ENCODE measurements at regions of chr21 and their contacts with region 1.

Region 1: DNA sequence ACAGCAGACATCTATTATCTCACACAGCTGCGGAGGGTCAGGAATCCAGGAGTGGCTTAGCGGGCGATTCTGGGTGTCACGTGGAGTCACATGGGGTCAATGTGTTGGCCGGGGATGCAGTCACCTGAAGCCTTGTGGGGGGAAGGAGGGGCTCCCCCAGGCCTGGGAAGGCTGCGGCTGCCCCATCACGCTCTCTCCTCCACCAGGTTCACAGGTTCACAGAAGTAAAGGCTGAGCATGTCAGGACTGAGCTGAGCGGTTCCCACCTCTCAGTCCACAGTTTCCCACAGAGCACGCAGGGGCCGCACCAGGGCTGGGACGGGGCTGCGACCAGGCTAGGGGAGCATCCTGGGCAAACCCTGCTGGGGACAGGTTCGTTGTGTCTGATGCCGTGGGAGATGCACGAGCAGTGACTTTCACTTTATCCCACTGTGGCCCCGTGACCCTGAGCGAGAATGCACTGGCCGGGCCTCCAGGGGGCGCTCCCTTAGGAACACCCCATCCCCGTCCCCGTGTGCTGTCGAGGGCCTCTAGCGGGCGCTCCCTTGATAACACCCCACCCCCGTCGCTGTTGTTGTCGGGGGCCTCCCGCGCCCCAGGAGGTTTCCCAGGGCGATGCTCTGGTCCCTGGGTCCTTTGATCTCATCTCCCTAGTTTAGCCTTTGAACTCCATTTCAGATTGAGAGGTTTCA is 73.2 kb upstream of the TRAPPC10 start:
- DNase-seq: peak; percentile 82 to 94 (median 91)
- ATAC-seq: peak; percentile 100
- H3K4me3 ChIP-seq: peak overlapping the region; percentile 57 to 67
- H3K4me3 Mint-ChIP-seq: peak overlapping the region; percentile 91
- H3K27ac ChIP-seq: peak overlapping the region in 1 of 2 experiments; percentile 40
- H3K27ac Mint-ChIP-seq: peak overlapping the region; percentile 85
- H3K4me1 ChIP-seq: peaks cover 14% of the 10 kb centered on the region
- H3K4me1 Mint-ChIP-seq: peaks cover 18% of the 10 kb centered on the region
- H3K27me3 ChIP-seq: no peaks in the 10 kb centered on the region
- H3K27me3 Mint-ChIP-seq: no peaks in the 10 kb centered on the region
- CTCF ChIP-seq: peak; percentile 100

Region 2: DNA sequence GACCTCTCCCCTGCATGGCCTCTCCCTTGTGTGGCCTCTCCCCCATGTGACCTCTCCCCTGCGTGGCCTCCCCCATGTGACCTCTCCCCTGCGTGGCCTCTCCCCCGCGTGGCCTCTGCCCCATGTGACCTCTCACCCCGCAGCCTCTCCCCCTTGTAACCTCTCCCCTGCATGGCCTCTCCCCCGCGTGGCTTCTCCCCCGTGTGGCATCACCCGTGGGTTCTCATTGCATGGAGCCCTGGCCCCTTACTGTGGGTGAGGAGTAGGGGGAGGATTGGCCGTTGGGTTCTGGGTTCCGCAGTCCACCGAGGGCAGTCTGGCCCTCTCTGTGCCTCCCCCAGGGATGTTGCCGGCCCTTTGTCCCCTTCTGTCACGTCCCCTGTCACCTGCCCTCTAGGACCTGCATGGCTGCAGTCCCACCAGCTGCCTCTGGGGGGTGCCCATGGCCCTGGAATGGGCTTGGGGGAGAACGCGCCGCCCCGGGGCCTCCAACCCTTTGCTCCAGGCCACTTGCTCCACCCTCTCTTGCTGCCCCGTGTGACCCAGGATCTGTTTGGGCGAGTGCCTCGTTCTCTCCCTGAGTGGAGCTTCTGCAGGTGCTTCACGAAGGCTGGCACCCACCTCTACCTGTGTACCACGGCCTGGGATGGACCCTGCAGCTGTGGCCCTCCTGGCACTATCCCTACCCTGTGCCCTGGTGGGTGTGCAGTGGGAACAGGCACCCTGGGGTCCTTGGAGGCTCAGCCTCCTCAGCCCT is 128.2 kb before region 1 on chr21:
- CTCF ChIA-PET with region 1: interaction called, 16 read pairs
- POLR2A ChIA-PET with region 1: no interaction called
- intact Hi-C with region 1: loop called (anchors 1 kb)
- DNase-seq: peak; percentile 81 to 93 (median 84)
- ATAC-seq: peak; percentile 98
- H3K4me3 ChIP-seq: no peak overlapping the region
- H3K4me3 Mint-ChIP-seq: no peak overlapping the region
- H3K27ac ChIP-seq: no peak overlapping the region
- H3K27ac Mint-ChIP-seq: no peak overlapping the region
- H3K4me1 ChIP-seq: peaks cover 9% of the 10 kb centered on the region
- H3K4me1 Mint-ChIP-seq: peaks cover 7% of the 10 kb centered on the region
- H3K27me3 ChIP-seq: no peaks in the 10 kb centered on the region
- H3K27me3 Mint-ChIP-seq: no peaks in the 10 kb centered on the region
- CTCF ChIP-seq: peak; percentile 86

Region 3: GRCh38 chr21:43842742-43843141 is 96.2 kb before region 1 on chr21:
- CTCF ChIA-PET with region 1: interaction called, 12 read pairs
- POLR2A ChIA-PET with region 1: no interaction called
- intact Hi-C with region 1: no loop called
- DNase-seq: no peak
- ATAC-seq: no peak
- H3K4me3 ChIP-seq: no peak overlapping the region
- H3K4me3 Mint-ChIP-seq: no peak overlapping the region
- H3K27ac ChIP-seq: no peak overlapping the region
- H3K27ac Mint-ChIP-seq: peak overlapping the region; percentile 49
- H3K4me1 ChIP-seq: no peaks in the 10 kb centered on the region
- H3K4me1 Mint-ChIP-seq: peaks cover 5% of the 10 kb centered on the region
- H3K27me3 ChIP-seq: no peaks in the 10 kb centered on the region
- H3K27me3 Mint-ChIP-seq: peaks cover 6% of the 10 kb centered on the region
- CTCF ChIP-seq: no peak

Region 4: DNA sequence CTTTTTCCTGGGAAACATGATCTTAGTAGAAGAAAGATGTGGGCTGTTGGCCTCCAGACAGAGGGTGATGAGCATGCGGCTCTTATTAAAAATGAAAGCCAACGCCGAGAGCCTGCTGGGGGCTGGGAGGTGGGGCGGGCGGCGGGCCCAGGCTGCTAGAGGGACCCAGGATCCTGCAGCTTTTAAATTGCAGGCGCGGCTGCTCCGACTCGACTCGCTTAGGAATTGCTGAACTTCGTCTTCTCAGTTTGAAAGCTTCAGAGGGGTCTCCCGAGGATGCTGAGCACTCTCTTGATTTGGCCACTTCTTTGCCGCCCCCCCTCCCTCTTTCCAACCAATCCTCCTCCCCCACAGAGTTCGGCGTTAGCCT is 72.7 kb before region 1 on chr21:
- CTCF ChIA-PET with region 1: interaction called, 3 read pairs
- POLR2A ChIA-PET with region 1: no interaction called
- intact Hi-C with region 1: loop called (anchors 1 to 2 kb)
- DNase-seq: peak in 5 of 9 experiments; percentile 21 to 65 (median 48)
- ATAC-seq: peak; percentile 37
- H3K4me3 ChIP-seq: peak overlapping the region; percentile 56 to 61
- H3K4me3 Mint-ChIP-seq: peak overlapping the region; percentile 81
- H3K27ac ChIP-seq: peak overlapping the region; percentile 45 to 64
- H3K27ac Mint-ChIP-seq: peak overlapping the region; percentile 85
- H3K4me1 ChIP-seq: peaks cover 23% of the 10 kb centered on the region
- H3K4me1 Mint-ChIP-seq: peaks cover 49% of the 10 kb centered on the region
- H3K27me3 ChIP-seq: no peaks in the 10 kb centered on the region
- H3K27me3 Mint-ChIP-seq: no peaks in the 10 kb centered on the region
- CTCF ChIP-seq: no peak

Region 5: GRCh38 chr21:43893536-43894205 is 45.2 kb before region 1 on chr21:
- CTCF ChIA-PET with region 1: interaction called, 11 read pairs
- POLR2A ChIA-PET with region 1: interaction called, 4 read pairs
- intact Hi-C with region 1: no loop called
- DNase-seq: peak in 2 of 9 experiments; percentile 22 to 50
- ATAC-seq: peak; percentile 36
- H3K4me3 ChIP-seq: peak overlapping the region; percentile 5 to 13
- H3K4me3 Mint-ChIP-seq: peak overlapping the region; percentile 79
- H3K27ac ChIP-seq: peak overlapping the region in 1 of 2 experiments; percentile 52
- H3K27ac Mint-ChIP-seq: peak overlapping the region; percentile 88
- H3K4me1 ChIP-seq: peaks cover 28% of the 10 kb centered on the region
- H3K4me1 Mint-ChIP-seq: peaks cover 49% of the 10 kb centered on the region
- H3K27me3 ChIP-seq: no peaks in the 10 kb centered on the region
- H3K27me3 Mint-ChIP-seq: no peaks in the 10 kb centered on the region
- CTCF ChIP-seq: no peak

Region 6: DNA sequence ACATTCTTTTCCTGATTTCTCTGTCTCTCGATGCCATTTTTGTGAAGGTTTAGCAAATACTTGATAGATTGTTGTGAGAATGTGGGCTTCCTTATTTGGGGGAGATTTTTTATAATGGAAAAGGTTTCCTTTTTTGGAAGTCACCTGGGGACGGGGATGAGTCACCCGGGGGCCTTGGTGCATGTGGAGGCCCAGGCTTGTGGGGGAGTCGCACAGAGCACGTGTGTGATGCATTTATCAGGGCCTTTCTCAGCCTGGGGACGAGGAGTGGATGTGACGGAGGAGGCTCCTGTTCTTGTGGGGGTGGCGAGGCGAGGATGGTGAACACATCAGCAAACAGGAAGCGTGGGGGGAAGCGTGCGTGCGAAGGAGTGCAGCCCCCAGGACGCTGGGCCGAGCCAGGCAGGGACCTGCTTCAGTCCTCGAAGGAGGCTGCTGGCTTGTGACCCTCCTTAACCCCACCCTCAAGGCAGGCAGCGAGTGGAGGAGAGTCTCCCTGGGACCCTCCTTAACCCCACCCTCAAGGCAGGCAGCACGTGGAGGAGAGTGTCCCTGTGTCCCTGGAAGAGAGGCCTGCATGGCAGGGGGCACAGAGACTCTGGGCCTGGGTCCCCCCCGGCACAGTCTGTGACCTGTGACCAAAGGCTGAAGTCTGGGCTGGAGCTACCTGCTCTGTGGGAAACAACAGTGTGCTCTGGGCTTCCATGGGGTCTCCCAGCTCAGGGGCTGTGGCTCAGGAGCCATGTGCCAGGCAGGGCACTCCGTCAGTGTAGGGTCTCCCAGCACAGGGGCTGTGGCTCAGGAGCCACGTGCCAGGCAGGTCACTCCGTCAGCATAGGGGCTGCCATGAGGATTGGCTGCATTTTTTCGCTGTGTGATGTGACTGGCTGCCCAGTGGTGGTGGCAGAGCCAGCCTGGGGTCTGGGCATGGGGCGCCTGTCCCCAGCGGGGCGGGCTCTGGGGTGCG is 16.6 kb before region 1 on chr21:
- CTCF ChIA-PET with region 1: interaction called, 33 read pairs
- POLR2A ChIA-PET with region 1: interaction called, 3 read pairs
- intact Hi-C with region 1: loop called (anchors 1 to 2 kb)
- DNase-seq: peak; percentile 29 to 91 (median 77)
- ATAC-seq: peak; percentile 80
- H3K4me3 ChIP-seq: peak overlapping the region; percentile 15 to 36
- H3K4me3 Mint-ChIP-seq: peak overlapping the region; percentile 78
- H3K27ac ChIP-seq: peak overlapping the region; percentile 74 to 78
- H3K27ac Mint-ChIP-seq: peak overlapping the region; percentile 96
- H3K4me1 ChIP-seq: peaks cover 46% of the 10 kb centered on the region
- H3K4me1 Mint-ChIP-seq: peaks cover 49% of the 10 kb centered on the region
- H3K27me3 ChIP-seq: peaks cover 0 to 2% of the 10 kb centered on the region in 2 experiments
- H3K27me3 Mint-ChIP-seq: no peaks in the 10 kb centered on the region
- CTCF ChIP-seq: no peak

Region 7: GRCh38 chr21:43975495-43975993 is 36.6 kb after region 1 on chr21:
- CTCF ChIA-PET with region 1: interaction called, 3 read pairs
- POLR2A ChIA-PET with region 1: no interaction called
- intact Hi-C with region 1: loop called (anchors 1 kb)
- DNase-seq: peak; percentile 72 to 89 (median 81)
- ATAC-seq: peak; percentile 98
- H3K4me3 ChIP-seq: no peak overlapping the region
- H3K4me3 Mint-ChIP-seq: no peak overlapping the region
- H3K27ac ChIP-seq: no peak overlapping the region
- H3K27ac Mint-ChIP-seq: no peak overlapping the region
- H3K4me1 ChIP-seq: no peaks in the 10 kb centered on the region
- H3K4me1 Mint-ChIP-seq: peaks cover 14% of the 10 kb centered on the region
- H3K27me3 ChIP-seq: no peaks in the 10 kb centered on the region
- H3K27me3 Mint-ChIP-seq: no peaks in the 10 kb centered on the region
- CTCF ChIP-seq: peak; percentile 95

Region 8: GRCh38 chr21:44065428-44065827 is 126.5 kb after region 1 on chr21:
- CTCF ChIA-PET with region 1: no interaction called
- POLR2A ChIA-PET with region 1: no interaction called
- intact Hi-C with region 1: no loop called
- DNase-seq: peak; percentile 57 to 98 (median 79)
- ATAC-seq: peak; percentile 88
- H3K4me3 ChIP-seq: peak overlapping the region in 1 of 2 experiments; percentile 5
- H3K4me3 Mint-ChIP-seq: peak overlapping the region; percentile 73
- H3K27ac ChIP-seq: peak overlapping the region; percentile 64 to 94
- H3K27ac Mint-ChIP-seq: peak overlapping the region; percentile 96
- H3K4me1 ChIP-seq: peaks cover 24% of the 10 kb centered on the region
- H3K4me1 Mint-ChIP-seq: peaks cover 49% of the 10 kb centered on the region
- H3K27me3 ChIP-seq: no peaks in the 10 kb centered on the region
- H3K27me3 Mint-ChIP-seq: no peaks in the 10 kb centered on the region
- CTCF ChIP-seq: no peak